Dorsolateral prefrontal cortex (tissue), 120 donors: ENCODE measurements at regions of chr20 and their contacts with region 1.

Region 1: GRCh38 chr20:24781422-24781980 is 167.6 kb upstream of the CST7 start:
- DNase-seq: peak; percentile 22 to 73 (median 63)
- H3K4me3 ChIP-seq: peak overlapping the region in 1 of 59 donors; percentile 34
- H3K27ac ChIP-seq: peak overlapping the region in 1 of 59 donors; percentile 25
- H3K27me3 ChIP-seq: no peaks in the 10 kb centered on the region
- CTCF ChIP-seq: peak; percentile 33 to 87 (median 71)

Region 2: GRCh38 chr20:23937303-23938117 is 844.0 kb before region 1 on chr20:
- intact Hi-C with region 1: loop called in 1 of 2 experiments (anchors 10 kb)
- DNase-seq: peak; percentile 42 to 84 (median 74)
- H3K4me3 ChIP-seq: no peak overlapping the region
- H3K27ac ChIP-seq: no peak overlapping the region
- H3K27me3 ChIP-seq: no peaks in the 10 kb centered on the region
- CTCF ChIP-seq: peak; percentile 64 to 99 (median 91)

Region 3: DNA sequence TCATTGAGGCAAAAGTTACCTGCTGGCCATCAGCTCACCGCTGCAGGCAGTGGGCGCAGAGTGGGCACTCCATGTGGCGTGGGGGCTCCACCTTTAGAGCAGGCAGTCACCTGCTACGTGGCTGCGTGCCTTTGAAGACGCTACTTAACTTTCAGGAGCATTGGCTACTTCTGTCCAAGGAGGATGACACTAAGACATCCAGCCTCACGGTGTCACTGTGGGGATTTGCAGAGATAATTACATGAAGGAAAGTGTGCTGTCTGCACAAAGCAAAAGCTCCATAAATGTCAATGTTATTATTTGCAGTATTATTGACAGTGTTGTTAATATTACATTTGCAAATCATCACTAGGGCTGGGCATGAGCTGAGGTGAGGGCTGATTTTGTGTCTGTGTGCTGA is 478.1 kb before region 1 on chr20:
- intact Hi-C with region 1: loop called (anchors 2 kb)
- DNase-seq: peak in 3 of 10 donors; percentile 26 to 69 (median 65)
- H3K4me3 ChIP-seq: no peak overlapping the region
- H3K27ac ChIP-seq: no peak overlapping the region
- H3K27me3 ChIP-seq: peaks cover 0 to 8% (median 0%) of the 10 kb centered on the region in 45 donors
- CTCF ChIP-seq: peak in 51 of 56 donors; percentile 20 to 76 (median 54)

Region 4: DNA sequence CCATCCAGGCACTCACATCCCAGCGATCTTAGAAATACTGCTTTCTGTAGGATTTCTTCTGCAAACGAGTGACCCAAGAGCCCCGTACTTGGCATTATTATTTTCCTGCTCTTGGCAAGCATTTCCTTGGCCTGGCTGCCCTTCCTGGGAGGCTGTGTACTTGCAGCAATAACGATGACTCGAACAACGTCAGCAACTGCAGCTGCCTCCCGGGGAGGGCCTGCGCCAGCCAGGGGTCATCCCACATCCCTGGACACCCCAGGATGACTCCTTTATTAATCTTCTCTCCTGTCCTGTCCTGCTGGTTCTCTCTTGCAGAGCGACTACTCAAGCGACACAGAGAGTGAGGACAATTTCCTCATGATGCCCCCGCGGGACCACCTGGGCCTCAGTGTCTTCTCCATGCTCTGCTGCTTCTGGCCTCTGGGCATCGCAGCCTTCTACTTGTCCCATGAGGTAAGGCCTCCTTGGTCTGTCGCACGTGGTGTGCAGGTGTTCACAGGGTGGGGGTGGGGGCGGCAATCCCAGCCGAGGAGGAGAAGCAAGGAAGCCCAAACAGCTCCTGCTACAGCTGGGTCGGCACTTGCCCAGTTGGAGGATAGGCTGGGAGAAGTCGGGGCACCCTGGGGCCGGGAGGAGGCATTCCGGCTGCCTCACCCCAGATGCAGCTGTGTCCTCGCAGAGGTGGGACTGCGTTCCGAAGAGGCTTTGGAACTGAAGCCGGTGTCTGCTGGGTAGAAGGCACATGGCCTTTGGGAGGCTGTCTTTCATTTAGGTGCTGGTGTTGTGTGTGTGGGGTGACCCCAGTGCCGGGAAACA is 196.8 kb before region 1 on chr20:
- intact Hi-C with region 1: loop called in 1 of 2 experiments (anchors 10 kb)
- DNase-seq: peak in 1 of 10 donors; percentile 47
- H3K4me3 ChIP-seq: no peak overlapping the region
- H3K27ac ChIP-seq: peak overlapping the region in 26 of 59 donors; percentile 8 to 76 (median 52)
- H3K27me3 ChIP-seq: no peaks in the 10 kb centered on the region
- CTCF ChIP-seq: no peak

Region 5: DNA sequence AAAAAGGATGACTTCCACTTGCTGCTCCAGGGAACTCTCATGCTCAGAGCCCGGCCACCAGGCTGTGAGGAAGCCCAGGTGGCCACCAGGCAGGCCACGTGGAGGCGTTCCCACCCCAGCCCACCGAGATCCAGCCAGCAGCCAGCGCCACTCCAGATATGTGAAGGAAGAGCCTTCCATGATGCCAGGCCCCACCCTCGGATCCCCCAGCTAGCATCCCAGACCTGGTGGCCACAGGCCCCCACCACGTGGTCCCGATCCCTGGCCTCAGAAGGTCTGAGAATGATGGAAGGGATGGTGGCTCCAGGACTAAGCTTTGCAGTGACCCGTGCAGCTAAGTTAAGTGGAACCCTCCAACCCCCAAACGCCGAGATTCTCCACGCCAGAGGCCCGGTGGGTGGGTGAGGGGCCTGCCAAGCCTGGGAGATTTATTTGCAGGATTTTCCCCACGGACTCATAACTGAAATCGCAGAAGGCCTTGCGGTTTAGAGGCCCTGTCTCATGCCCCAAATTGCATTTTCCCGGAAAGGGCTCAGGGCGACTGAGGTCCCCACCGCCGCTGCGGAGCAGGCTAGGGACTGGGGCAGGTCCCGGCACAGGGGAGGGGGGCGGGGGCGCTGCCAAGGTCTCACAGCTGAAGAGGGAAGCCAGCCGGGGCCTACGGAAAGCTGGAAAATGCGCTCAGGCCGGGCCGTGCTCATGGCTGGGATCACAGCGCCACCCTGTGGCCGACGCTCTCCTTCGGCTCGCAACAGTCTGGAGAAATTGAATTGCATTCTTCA is 136.5 kb after region 1 on chr20:
- intact Hi-C with region 1: loop called in 1 of 2 experiments (anchors 10 kb)
- DNase-seq: peak; percentile 67 to 81 (median 74)
- H3K4me3 ChIP-seq: peak overlapping the region in 10 of 59 donors; percentile 17 to 48 (median 26)
- H3K27ac ChIP-seq: peak overlapping the region in 6 of 59 donors; percentile 9 to 46 (median 34)
- H3K27me3 ChIP-seq: no peaks in the 10 kb centered on the region
- CTCF ChIP-seq: peak; percentile 77 to 96 (median 92)